Natural killer cell (primary cell): ENCODE measurements at regions of chr6 and their contacts with region 1.

Region 1: GRCh38 chr6:11291582-11291981 is 59.1 kb upstream of the NEDD9 start:
- DNase-seq: no peak
- ATAC-seq: no peak
- H3K4me3 ChIP-seq: no peak overlapping the region
- H3K4me3 Mint-ChIP-seq: peak overlapping the region; percentile 55
- H3K27ac ChIP-seq: no peak overlapping the region
- H3K27ac Mint-ChIP-seq: peak overlapping the region; percentile 58 to 71
- H3K4me1 ChIP-seq: peaks cover 8% of the 10 kb centered on the region
- H3K4me1 Mint-ChIP-seq: peaks cover 47 to 65% of the 10 kb centered on the region in 2 donors
- H3K27me3 ChIP-seq: no peaks in the 10 kb centered on the region
- H3K27me3 Mint-ChIP-seq: no peaks in the 10 kb centered on the region
- CTCF ChIP-seq: no peak

Region 2: GRCh38 chr6:11258260-11259237 is 33.0 kb before region 1 on chr6:
- intact Hi-C with region 1: loop called (anchors 5 kb)
- DNase-seq: peak; percentile 40 to 68
- ATAC-seq: peak; percentile 71 to 87 (median 85)
- H3K4me3 ChIP-seq: no peak overlapping the region
- H3K4me3 Mint-ChIP-seq: peak overlapping the region; percentile 69
- H3K27ac ChIP-seq: peak overlapping the region; percentile 74
- H3K27ac Mint-ChIP-seq: peak overlapping the region; percentile 85 to 93
- H3K4me1 ChIP-seq: peaks cover 56% of the 10 kb centered on the region
- H3K4me1 Mint-ChIP-seq: peaks cover 87 to 92% of the 10 kb centered on the region in 2 donors
- H3K27me3 ChIP-seq: no peaks in the 10 kb centered on the region
- H3K27me3 Mint-ChIP-seq: no peaks in the 10 kb centered on the region
- CTCF ChIP-seq: no peak

Region 3: DNA sequence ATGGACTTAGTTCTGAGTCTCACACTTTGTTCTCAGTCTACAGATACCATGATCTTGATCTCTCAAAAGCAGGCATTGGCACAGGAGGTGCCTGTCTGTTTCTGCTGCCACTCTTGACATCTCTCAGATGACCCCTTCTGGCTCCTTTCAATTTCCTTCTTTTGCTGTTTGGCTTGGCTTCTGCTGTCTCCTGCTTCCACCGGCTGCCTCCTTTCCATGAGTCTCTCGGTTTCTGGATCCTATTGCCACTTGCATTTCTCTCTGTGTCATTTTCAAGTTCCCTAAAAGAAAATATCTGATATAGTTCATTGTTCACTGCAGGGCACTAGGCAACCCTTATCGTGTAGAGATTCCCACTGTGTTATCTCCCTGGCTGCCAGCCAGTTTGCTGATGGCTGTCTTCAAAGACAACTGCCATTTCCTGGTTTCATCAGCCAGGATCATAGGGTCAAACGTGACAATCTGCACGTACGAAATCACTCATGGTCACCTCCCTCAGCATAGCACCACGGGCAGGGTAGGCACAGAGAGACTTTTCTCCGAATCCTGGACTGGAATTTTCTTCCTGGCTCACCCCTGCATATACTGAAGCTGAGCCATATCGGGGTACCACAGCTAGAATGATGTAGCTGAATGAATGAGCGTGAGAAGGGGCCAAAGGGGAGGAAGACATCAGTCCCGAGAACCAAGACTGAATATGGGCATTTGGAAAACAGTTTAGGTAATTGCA is 101.4 kb after region 1 on chr6:
- intact Hi-C with region 1: no loop called
- DNase-seq: no peak
- ATAC-seq: peak in 1 of 3 donors; percentile 86
- H3K4me3 ChIP-seq: no peak overlapping the region
- H3K4me3 Mint-ChIP-seq: no peak overlapping the region
- H3K27ac ChIP-seq: no peak overlapping the region
- H3K27ac Mint-ChIP-seq: no peak overlapping the region
- H3K4me1 ChIP-seq: peaks cover 4% of the 10 kb centered on the region
- H3K4me1 Mint-ChIP-seq: peaks cover 0 to 10% of the 10 kb centered on the region in 2 donors
- H3K27me3 ChIP-seq: no peaks in the 10 kb centered on the region
- H3K27me3 Mint-ChIP-seq: peaks cover 13 to 16% of the 10 kb centered on the region in 2 donors
- CTCF ChIP-seq: no peak